Heart right ventricle (tissue), 16 donors: ENCODE measurements at regions of chr2 and their contacts with region 1.

Region 1: DNA sequence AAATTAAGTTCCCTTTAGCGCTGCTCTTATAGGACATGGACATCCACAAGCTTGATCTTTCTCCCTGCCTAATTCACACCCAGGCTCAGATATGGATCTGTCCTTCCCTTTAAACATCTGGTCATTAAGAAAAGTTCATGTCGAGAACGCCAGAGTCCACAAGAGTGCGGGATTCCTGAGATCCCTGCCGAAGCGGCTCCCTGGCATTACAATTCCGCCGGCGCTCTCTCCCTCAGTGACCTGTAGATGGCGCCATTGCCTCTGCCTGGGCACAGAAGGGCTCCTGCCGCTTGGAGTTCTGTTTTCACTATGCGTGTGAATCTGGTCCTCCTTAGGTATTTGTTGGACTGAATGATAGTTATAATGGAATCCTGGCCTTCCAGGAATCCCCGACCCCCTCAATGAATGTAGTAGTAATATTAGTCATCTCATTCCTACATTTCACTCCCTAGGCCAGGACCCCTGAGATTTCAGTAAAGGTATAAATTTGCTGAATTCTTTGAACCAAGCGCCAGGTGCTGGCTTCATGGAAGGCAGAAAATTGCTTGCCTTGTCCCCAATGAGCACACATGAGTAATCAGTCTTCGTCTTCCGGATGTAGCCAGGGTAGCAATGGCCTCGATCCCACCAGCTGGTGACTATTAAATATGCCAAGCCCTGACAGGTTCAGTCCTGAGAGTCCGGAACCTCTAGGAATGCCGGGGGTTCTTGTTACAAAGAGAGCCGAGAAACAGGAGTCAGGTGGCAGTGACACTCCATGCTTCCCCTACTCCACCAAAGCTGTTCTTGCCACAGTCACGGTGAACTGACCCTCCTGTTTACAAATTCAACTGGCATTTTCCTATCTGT is 26.4 kb upstream of the CD207 start:
- DNase-seq: peak; percentile 76 to 84
- ATAC-seq: peak; percentile 78 to 92 (median 88)
- H3K4me3 ChIP-seq: no peak overlapping the region
- H3K27ac ChIP-seq: no peak overlapping the region
- H3K4me1 ChIP-seq: peaks cover 0 to 6% (median 0%) of the 10 kb centered on the region in 9 donors
- H3K27me3 ChIP-seq: peaks cover 0 to 59% (median 47%) of the 10 kb centered on the region in 7 donors
- CTCF ChIP-seq: peak; percentile 83 to 98 (median 97)

Region 2: DNA sequence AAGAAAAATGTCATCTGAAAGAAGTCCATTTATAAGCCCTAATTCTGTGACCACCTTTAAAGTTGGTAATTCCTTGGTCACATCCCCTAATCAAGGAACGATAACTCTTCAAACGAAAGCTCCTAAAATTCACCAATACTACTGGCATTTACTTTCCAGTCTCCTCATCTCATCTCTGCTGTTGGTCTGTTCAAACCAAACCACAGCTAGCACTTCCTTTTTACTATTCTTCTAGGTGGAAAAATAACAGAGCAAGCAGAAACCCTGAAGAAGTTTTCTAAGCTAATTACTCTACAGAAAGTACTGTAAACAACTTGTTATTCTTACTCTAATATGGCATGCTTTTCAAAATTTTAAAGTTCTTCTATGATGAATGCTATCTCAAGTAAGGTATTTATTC is 635.2 kb before region 1 on chr2:
- intact Hi-C with region 1: no loop called
- DNase-seq: no peak
- ATAC-seq: no peak
- H3K4me3 ChIP-seq: no peak overlapping the region
- H3K27ac ChIP-seq: peak overlapping the region in 1 of 10 donors; percentile 4
- H3K4me1 ChIP-seq: no peaks in the 10 kb centered on the region
- H3K27me3 ChIP-seq: no peaks in the 10 kb centered on the region
- CTCF ChIP-seq: no peak

Region 3: DNA sequence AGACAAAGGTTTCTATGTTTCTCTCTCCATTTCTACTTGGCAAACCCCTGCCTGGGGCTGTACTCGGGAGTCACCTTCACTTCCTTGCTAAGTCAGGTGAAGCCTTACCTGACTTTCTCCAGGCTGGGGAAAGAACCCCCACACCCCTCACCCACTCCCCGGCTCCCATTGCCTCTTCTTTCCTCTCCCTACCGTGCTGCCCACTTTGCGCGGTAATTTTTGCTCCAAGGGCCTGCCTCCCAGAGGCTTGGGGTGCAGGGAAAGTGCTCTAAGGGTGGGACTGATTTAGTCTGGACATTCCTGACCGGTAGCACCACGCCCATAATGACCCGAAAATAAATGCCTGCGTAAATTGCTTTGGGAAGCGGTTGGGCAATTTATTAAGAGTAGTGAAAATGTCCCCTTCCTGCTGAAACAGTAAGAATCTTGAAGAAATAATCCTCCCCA is 24.6 kb after region 1 on chr2:
- intact Hi-C with region 1: loop called in 1 of 10 experiments (anchors 1 kb)
- DNase-seq: no peak
- ATAC-seq: no peak
- H3K4me3 ChIP-seq: peak overlapping the region in 1 of 10 donors; percentile 51
- H3K27ac ChIP-seq: peak overlapping the region in 3 of 10 donors; percentile 45 to 79 (median 56)
- H3K4me1 ChIP-seq: peaks cover 4 to 43% (median 29%) of the 10 kb centered on the region in 9 donors
- H3K27me3 ChIP-seq: peaks cover 17 to 100% (median 99%) of the 10 kb centered on the region in 7 donors
- CTCF ChIP-seq: no peak

Region 4: DNA sequence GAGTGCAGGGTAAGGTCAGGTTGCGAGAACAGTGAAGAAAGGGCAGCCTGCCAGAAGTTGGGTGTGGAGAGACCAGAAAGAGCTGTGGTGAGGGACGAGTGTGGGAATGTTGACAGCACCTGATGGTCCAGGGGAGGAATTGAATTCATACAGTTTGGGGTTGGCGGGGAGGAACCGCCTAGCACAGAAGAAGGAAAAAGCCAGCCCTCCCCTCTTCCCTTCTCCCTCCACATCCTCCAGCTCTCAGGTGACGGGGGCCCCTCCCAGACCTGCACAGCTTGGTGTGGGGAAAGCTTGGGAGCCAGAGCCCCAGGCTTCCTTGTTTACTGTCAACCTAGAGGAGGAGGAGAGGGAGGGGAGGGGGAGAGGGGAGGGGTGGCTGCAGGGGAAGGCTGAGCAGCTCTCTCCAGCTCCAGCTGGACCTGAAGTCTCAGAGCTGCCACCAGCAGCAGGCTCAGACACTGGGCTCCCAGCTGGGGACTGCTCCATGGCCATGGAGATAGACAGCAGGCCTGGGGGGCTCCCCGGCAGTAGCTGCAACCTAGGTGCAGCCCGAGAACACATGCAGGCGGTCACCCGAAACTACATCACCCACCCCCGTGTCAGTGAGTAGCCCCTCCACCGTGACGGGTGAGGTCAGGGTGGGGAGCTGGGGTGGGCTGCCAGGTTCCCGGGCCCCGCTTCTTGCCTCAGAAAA is 73.6 kb after region 1 on chr2 and contains the start of gene ATP6V1B1:
- intact Hi-C with region 1: loop called in 1 of 10 experiments (anchors 5 kb)
- DNase-seq: no peak
- ATAC-seq: no peak
- H3K4me3 ChIP-seq: no peak within 1 kb of the TSS
- H3K27ac ChIP-seq: no peak within 1 kb of the TSS
- H3K4me1 ChIP-seq: no peaks in the 10 kb centered on the region
- H3K27me3 ChIP-seq: peaks cover 0 to 28% (median 13%) of the 10 kb centered on the region in 7 donors
- CTCF ChIP-seq: no peak
- total RNA-seq, gene ATP6V1B1: 0.30 to 2.0 (median 0.88) TPM in 6 of 10 donors, not detected in the others

Region 5: DNA sequence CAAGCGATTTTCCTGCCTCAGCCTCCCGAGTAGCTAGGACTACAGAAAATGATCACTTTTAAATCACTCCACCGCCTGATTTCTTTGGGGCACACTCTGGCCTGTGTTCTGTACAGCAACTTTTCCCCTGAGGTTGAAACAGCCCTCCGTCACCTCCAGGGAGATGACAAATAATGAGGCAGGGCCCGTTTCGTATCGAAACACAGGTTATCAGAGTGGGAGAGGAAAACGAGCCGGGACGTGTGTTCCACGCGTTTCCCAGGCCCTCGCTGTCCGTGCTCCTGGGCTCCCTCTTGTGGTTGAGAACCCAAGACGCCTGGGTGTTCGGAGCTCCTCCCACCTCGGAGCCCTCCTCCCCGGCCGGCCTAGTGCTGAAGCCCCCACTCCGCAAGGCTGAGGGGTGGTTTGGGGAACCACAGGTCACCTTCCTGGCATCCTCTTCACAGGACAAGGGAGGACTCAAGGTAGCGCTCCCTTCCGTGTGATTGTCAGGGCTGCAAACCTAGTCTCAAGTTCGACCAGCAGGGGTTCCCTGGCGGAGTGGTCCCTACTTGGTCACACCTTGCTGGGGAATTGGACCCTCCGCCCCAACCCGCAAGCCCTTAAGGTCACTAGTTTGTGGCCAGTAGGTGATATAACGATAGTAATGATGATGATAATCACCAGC is 86.5 kb after region 1 on chr2:
- intact Hi-C with region 1: loop called in 3 of 10 experiments (anchors 2 kb)
- DNase-seq: peak; percentile 79 to 84
- ATAC-seq: peak; percentile 91 to 97 (median 94)
- H3K4me3 ChIP-seq: peak overlapping the region in 7 of 10 donors; percentile 25 to 49 (median 33)
- H3K27ac ChIP-seq: no peak overlapping the region
- H3K4me1 ChIP-seq: peaks cover 0 to 20% (median 0%) of the 10 kb centered on the region in 9 donors
- H3K27me3 ChIP-seq: peaks cover 0 to 55% (median 20%) of the 10 kb centered on the region in 7 donors
- CTCF ChIP-seq: peak; percentile 58 to 92 (median 89)